Sigmoid colon (tissue), 7 donors: ENCODE measurements at regions of chr12 and their contacts with region 1.

Region 1: DNA sequence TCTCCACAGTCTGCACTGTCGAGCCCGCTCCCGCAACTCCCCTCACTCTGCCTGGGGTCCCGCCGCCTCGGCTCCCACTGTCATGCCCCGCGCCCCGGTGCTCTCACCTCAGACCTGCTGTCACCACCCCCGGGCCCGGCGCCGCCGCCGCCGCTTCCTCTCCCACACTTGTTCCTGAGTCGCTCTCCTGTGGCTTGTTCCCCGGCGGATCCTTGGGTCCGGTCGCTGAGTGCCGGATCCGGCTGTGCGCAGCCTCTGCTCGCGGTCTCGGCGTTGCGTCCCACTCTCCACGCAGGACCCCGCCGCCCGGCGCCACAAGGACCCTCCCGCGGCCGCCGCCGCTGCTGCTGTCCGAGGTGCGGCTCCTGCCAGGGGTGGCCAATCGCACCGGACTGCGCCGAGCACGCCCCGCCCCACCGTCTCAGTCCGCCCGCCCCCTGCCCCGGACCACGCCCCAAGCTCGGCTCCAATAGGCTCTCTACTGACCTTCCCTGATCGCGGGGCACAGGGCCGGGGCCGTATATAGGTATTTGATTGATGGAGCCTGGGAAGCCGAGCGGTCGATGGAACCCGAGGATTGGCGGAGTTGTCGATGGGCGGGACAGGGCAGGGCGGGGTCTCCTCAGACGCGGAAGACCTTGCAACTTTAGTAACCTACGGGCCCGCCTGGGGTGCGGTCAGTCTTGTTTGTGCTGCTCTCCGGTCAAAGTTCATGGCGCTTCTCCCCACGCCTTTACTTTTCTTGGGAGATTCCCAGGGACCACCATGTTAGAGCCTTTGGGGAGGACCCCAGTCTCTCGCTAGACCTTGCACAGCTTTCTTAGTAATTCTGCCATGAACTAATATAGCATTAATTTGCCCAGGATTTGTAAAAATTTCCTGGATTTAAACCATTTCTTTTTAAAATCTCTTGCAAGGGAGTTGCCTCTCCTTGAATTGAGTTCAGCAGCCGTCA is at the start of gene TAOK3:
- DNase-seq: peak; percentile 100
- H3K4me3 ChIP-seq: peak within 1 kb of the TSS; percentile 74 to 94 (median 86)
- H3K27ac ChIP-seq: peak within 1 kb of the TSS; percentile 83 to 95 (median 92)
- H3K4me1 ChIP-seq: peaks cover 0 to 58% (median 42%) of the 10 kb centered on the region in 4 donors
- H3K27me3 ChIP-seq: no peaks in the 10 kb centered on the region
- CTCF ChIP-seq: no peak
- EP300 ChIP-seq: peak in 1 of 4 donors; percentile 20
- POLR2A ChIP-seq: peak; percentile 82 to 89
- total RNA-seq, gene TAOK3: 18.9 to 66.2 (median 31.6) TPM

Region 2: DNA sequence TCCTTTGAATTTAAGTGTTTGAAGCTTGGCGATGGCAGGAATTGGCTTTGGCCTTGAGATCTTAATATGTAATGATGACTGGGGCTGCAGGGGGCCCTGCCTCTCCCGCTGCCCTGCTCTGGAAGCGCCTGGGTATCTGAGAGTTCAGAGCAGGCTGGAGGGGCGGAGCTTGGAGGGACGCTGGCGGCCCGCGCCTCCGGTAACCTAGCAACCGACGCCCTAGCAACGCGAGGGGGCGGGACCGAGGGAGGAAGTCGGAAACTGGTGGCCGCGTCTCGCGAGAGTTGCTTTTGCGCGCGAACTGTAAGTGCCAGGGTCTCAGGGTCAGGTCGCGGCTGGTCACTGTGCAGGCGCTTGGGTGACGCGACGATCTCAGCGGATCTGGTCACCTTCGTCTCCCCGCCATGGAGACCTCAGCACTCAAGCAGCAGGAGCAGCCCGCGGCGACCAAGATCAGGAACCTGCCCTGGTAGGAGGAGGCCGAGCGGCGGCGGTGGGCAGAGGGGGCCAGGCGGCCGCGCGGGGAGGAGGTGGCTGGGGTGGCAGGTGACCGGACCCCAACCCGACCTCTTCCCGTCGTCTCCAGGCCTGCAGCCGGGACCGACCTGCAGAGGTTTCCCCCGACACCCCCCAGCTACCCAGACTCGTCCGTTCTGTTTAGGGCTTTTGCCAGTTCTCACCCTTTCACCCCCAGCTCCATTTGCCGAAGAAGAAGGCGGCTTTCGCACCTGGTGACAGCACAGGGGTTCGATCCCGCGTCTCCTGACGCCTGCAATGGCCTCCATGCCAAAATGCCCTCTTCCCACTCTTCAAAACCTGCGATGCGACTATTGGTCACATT is 356.2 kb before region 1 on chr12 and contains the start of gene RFC5:
- intact Hi-C with region 1: loop called (anchors 10 kb)
- DNase-seq: peak; percentile 98
- H3K4me3 ChIP-seq: peak within 1 kb of the TSS; percentile 85 to 95 (median 90)
- H3K27ac ChIP-seq: peak within 1 kb of the TSS; percentile 44 to 72 (median 60)
- H3K4me1 ChIP-seq: peaks cover 0 to 17% (median 14%) of the 10 kb centered on the region in 4 donors
- H3K27me3 ChIP-seq: no peaks in the 10 kb centered on the region
- CTCF ChIP-seq: no peak
- EP300 ChIP-seq: no peak
- POLR2A ChIP-seq: no peak
- total RNA-seq, gene RFC5: 6.9 to 12.7 (median 9.7) TPM

Region 3: GRCh38 chr12:118120579-118121363 is 252.0 kb before region 1 on chr12:
- intact Hi-C with region 1: loop called (anchors 5 kb)
- DNase-seq: peak; percentile 84
- H3K4me3 ChIP-seq: no peak overlapping the region
- H3K27ac ChIP-seq: peak overlapping the region in 2 of 4 donors; percentile 19 to 38
- H3K4me1 ChIP-seq: peaks cover 0 to 8% (median 6%) of the 10 kb centered on the region in 4 donors
- H3K27me3 ChIP-seq: no peaks in the 10 kb centered on the region
- CTCF ChIP-seq: peak in 2 of 4 experiments; percentile 15 to 70
- EP300 ChIP-seq: no peak
- POLR2A ChIP-seq: no peak

Region 4: DNA sequence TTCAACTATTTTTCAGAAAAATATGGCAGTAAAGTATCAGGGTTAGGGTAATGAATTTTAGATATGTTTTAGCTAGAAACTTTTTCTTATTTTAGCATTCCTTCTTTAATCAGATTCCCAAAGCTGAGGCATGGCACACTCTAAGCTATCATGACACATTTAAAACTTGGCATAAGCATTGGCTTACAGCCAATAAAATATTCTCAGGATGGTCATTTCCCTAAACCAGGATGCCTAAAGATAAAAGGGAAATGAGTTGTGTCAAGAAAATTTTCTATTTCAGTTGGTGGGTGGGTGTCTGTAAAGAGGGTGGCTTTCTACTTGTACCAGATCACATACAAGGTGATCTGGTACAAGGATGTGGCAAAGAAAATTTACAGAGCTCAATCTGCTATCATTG is 189.1 kb before region 1 on chr12:
- intact Hi-C with region 1: loop called (anchors 1 kb)
- DNase-seq: no peak
- H3K4me3 ChIP-seq: no peak overlapping the region
- H3K27ac ChIP-seq: no peak overlapping the region
- H3K4me1 ChIP-seq: peaks cover 0 to 38% (median 28%) of the 10 kb centered on the region in 4 donors
- H3K27me3 ChIP-seq: no peaks in the 10 kb centered on the region
- CTCF ChIP-seq: no peak
- EP300 ChIP-seq: no peak
- POLR2A ChIP-seq: no peak

Region 5: DNA sequence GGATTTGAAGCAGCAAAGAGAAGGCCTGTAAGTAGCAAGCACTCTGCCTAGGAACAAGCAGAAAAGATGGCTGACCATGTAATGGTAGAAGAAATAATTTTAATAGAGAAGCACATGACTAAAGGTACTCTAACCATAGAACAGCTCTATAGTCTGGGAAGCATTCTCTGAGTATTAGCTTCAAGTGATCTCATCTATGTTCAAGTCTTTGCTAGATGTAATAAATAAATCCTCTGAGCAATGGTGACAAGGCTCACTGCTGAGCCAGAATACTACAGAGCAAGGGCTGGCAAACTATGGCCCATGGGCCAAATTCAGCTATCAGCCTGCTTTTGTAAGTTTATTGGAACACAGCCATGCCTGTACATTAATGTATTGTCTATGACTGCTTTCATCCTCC is 152.1 kb before region 1 on chr12:
- intact Hi-C with region 1: no loop called
- DNase-seq: no peak
- H3K4me3 ChIP-seq: no peak overlapping the region
- H3K27ac ChIP-seq: no peak overlapping the region
- H3K4me1 ChIP-seq: no peaks in the 10 kb centered on the region
- H3K27me3 ChIP-seq: no peaks in the 10 kb centered on the region
- CTCF ChIP-seq: no peak
- EP300 ChIP-seq: no peak
- POLR2A ChIP-seq: no peak

Region 6: DNA sequence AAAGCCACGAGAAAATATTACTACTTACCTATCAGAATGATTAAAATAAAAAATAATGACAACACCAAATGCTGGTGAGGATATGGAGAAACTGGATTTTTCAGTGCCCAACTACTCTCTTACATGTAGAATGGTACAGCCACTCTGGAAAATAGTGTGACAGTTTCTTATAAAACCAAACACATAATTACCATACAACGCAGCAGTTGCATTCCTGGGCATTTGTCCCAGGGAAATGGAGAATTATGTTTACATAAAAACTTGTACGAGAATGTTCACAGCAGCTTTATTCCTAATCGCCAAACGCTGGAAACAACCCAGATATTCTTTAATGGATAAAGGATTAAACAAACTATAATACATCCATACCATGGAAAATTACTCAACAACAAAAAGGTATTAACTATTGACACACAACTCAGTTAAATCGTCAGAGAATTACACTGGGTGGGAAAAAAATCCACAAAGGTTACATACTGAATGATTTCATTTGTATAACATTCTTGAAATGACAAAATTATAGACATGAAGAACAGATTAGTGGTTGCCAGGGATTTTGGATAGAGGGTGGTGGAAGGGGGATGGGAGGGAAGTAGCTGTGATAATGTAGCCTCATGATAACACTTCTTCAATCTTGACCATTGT is 35.5 kb before region 1 on chr12:
- intact Hi-C with region 1: no loop called
- DNase-seq: no peak
- H3K4me3 ChIP-seq: no peak overlapping the region
- H3K27ac ChIP-seq: peak overlapping the region in 1 of 4 donors; percentile 6
- H3K4me1 ChIP-seq: peaks cover 0 to 10% (median 5%) of the 10 kb centered on the region in 4 donors
- H3K27me3 ChIP-seq: no peaks in the 10 kb centered on the region
- CTCF ChIP-seq: no peak
- EP300 ChIP-seq: no peak
- POLR2A ChIP-seq: no peak

Region 7: GRCh38 chr12:118676153-118676552 is 303.3 kb after region 1 on chr12:
- intact Hi-C with region 1: no loop called
- DNase-seq: no peak
- H3K4me3 ChIP-seq: no peak overlapping the region
- H3K27ac ChIP-seq: no peak overlapping the region
- H3K4me1 ChIP-seq: no peaks in the 10 kb centered on the region
- H3K27me3 ChIP-seq: no peaks in the 10 kb centered on the region
- CTCF ChIP-seq: no peak
- EP300 ChIP-seq: no peak
- POLR2A ChIP-seq: no peak

Region 8: GRCh38 chr12:119176267-119176849 is 803.5 kb after region 1 on chr12:
- intact Hi-C with region 1: loop called (anchors 5 kb)
- DNase-seq: peak; percentile 99
- H3K4me3 ChIP-seq: peak overlapping the region; percentile 20 to 55 (median 40)
- H3K27ac ChIP-seq: peak overlapping the region; percentile 91 to 99 (median 96)
- H3K4me1 ChIP-seq: peaks cover 0 to 19% (median 16%) of the 10 kb centered on the region in 4 donors
- H3K27me3 ChIP-seq: no peaks in the 10 kb centered on the region
- CTCF ChIP-seq: no peak
- EP300 ChIP-seq: peak in 2 of 4 donors; percentile 63 to 92
- POLR2A ChIP-seq: peak in 1 of 2 donors; percentile 41